ENCODE measurements at regions of chr6 and their contacts with region 1.

Region 1: DNA sequence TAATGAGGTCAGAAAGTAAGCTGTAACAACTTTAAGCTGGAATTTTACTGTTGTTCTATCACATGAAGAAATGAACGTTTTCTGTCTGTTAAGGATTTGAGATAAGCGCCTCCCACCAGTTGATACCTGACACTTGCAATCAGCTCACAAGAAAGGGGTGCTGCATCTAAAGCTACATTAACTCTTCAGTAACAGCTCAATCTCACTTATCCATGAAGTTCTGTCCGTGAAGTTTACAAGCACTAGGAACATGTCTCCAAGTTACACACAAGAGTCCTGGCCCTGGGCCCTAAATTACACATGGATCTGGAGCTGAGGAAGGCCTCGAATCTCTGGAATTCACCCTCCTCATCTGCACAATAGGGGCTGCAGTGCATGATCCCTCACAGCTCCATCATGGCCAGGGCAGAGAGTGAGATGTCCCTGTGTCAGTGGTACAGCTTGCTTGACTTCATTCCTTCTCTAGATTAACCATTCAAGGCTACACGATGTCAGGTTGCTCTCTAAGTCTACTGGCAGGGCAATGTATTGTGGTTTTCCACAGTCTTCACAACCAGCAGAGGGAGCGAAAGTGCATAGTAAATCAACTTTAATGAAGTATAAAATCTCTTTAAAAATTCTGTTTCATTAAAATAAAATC is 182.4 kb upstream of the MCHR2 start:
- DNase-seq: no peak
- H3K4me3 ChIP-seq: no peak overlapping the region
- H3K27ac ChIP-seq: no peak overlapping the region
- H3K4me1 ChIP-seq: peaks cover 2 to 11% (median 5%) of the 10 kb centered on the region in 4 experiments; a peak in 5 of 7 replicates
- H3K27me3 ChIP-seq: peaks cover 0 to 1% (median 0%) of the 10 kb centered on the region in 4 experiments; a peak in 1 of 7 replicates
- CTCF ChIP-seq: peak in 2 of 3 experiments; percentile 28 to 47; a peak in 2 of 4 replicates
- EP300 ChIP-seq: no peak
- POLR2A ChIP-seq: no peak
- RAD21 ChIP-seq: peak; percentile 43 to 45

Region 2: GRCh38 chr6:100186552-100186951 is 10.1 kb after region 1 on chr6:
- CTCF ChIA-PET with region 1: interaction called, 14 read pairs
- POLR2A ChIA-PET with region 1: interaction called, 4 read pairs
- DNase-seq: no peak
- H3K4me3 ChIP-seq: no peak overlapping the region
- H3K27ac ChIP-seq: no peak overlapping the region
- H3K4me1 ChIP-seq: no peaks in the 10 kb centered on the region
- H3K27me3 ChIP-seq: peaks cover 0 to 1% (median 0%) of the 10 kb centered on the region in 4 experiments; a peak in 1 of 7 replicates
- CTCF ChIP-seq: no peak
- EP300 ChIP-seq: no peak
- POLR2A ChIP-seq: no peak
- RAD21 ChIP-seq: no peak

Region 3: GRCh38 chr6:100194535-100194934 is 18.1 kb after region 1 on chr6:
- CTCF ChIA-PET with region 1: interaction called, 10 read pairs
- POLR2A ChIA-PET with region 1: interaction called, 6 read pairs
- DNase-seq: no peak
- H3K4me3 ChIP-seq: no peak overlapping the region
- H3K27ac ChIP-seq: no peak overlapping the region
- H3K4me1 ChIP-seq: peaks cover 0 to 5% (median 0%) of the 10 kb centered on the region in 4 experiments; a peak in 2 of 7 replicates
- H3K27me3 ChIP-seq: no peaks in the 10 kb centered on the region
- CTCF ChIP-seq: no peak
- EP300 ChIP-seq: no peak
- POLR2A ChIP-seq: no peak
- RAD21 ChIP-seq: no peak

Region 4: DNA sequence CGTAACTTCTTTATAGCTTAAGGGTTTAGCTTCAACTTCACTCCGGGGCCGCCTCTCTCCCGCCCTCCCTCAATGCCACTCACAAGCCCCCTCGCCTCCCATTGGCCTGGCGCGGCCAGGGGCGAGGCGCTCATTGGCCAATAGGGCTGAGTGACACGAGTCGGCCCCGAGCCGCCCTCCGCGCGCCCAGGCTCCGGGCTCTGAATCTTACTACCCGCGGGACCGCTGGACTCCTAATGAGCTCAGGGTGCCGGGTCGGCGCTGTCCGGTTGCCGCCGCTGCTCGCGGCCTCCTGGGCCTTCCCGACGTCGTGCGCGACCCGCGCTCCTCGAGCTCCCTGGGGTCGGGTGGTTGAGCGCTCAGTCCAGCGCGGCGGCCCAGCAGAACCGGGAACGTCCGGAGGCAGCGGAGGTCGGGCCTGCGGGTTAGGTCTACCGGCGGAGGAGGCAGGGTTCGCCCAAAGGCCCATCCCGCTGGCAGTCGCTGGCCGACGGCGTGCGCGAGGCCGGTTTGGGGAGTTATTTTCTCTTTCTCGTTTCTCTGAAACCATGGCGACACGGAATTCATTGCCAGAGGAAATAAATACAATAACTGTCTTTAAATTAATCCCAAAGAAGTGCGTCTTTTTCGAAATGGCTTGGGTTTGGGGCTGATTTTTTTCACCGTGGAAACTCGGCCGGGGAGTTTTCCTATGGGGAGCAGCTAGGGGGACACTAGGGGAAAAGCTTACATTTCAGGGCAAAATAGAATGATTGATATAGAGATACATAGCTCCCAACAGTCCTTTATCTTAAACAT is 288.7 kb after region 1 on chr6 and contains the start of gene SIM1:
- CTCF ChIA-PET with region 1: interaction called, 12 read pairs
- POLR2A ChIA-PET with region 1: no interaction called
- DNase-seq: peak; percentile 75 to 92
- H3K4me3 ChIP-seq: peak within 1 kb of the TSS; percentile 25 to 56 (median 28); a peak in 7 of 8 replicates
- H3K27ac ChIP-seq: no peak within 1 kb of the TSS
- H3K4me1 ChIP-seq: peaks cover 13 to 36% (median 15%) of the 10 kb centered on the region in 4 experiments
- H3K27me3 ChIP-seq: peaks cover 86 to 100% (median 93%) of the 10 kb centered on the region in 4 experiments
- CTCF ChIP-seq: no peak
- EP300 ChIP-seq: no peak
- POLR2A ChIP-seq: no peak
- RAD21 ChIP-seq: no peak
- total RNA-seq, gene SIM1: 0.39 and 0.61 TPM in 2 replicates